GM18951 (cell line): ENCODE measurements at regions of chr20 and their contacts with region 1.

Region 1: DNA sequence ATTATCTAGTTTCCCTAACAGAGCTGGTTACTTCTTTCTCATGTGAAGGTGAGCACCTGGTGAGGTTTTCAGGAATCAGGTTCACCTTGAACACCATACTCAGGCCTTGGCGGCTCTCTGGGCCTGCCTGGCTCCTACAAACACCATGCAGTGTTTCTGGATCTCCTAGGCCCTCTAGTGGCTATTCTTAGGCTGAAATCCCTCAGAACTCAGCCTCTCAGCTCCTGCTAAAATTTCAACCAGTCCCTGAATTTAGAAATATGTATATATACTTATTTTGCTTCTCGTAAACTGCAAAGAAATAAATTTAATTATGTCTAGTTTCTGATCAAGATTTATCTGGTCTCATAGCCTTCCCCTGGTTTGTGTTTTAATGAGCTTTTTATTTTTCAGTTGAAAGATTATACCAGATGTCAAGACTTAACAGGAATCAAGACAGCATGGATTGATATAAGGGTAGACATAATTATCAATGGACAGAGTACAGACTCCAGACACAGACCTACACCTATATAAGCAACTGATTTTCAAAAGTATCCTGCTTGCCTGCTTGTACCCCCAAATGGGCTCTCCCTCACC is 55.9 kb downstream of the ANKEF1 start:
- POLR2A ChIP-seq: no peak

Region 2: GRCh38 chr20:9616833-9617489 is 473.7 kb before region 1 on chr20:
- in situ Hi-C with region 1: loop called (anchors 10 kb)
- POLR2A ChIP-seq: no peak

Region 3: GRCh38 chr20:11766976-11767375 is 1676.3 kb after region 1 on chr20:
- in situ Hi-C with region 1: no loop called
- POLR2A ChIP-seq: no peak